Activated CD4-positive, alpha-beta T cell treated with anti-CD3 and anti-CD28 coated beads for 36 hours (primary cell): ENCODE measurements at regions of chr7 and their contacts with region 1.

Region 1: DNA sequence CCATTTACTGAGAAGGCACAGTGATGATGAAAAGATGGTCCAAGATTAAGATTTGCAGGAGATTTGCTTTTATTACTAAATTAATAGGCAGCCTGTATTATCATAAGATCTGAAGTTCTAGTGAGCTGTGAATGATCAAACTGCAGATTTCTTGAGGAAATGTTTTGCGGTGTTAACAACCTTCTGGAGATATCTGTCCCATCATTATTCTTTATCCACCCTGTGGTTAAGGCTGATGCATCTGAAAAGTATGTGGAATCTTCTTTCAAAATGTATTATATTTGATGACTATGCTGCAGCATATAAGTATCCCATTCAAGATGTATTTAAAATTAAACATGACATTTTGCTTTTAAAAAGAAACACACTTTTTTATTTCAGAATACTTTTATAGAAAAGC is 150.3 kb downstream of the POLR1F start:
- DNase-seq: no peak
- ATAC-seq: no peak
- H3K4me3 Mint-ChIP-seq: no peak overlapping the region
- H3K27ac Mint-ChIP-seq: no peak overlapping the region
- H3K4me1 Mint-ChIP-seq: no peaks in the 10 kb centered on the region
- H3K27me3 Mint-ChIP-seq: no peaks in the 10 kb centered on the region

Region 2: DNA sequence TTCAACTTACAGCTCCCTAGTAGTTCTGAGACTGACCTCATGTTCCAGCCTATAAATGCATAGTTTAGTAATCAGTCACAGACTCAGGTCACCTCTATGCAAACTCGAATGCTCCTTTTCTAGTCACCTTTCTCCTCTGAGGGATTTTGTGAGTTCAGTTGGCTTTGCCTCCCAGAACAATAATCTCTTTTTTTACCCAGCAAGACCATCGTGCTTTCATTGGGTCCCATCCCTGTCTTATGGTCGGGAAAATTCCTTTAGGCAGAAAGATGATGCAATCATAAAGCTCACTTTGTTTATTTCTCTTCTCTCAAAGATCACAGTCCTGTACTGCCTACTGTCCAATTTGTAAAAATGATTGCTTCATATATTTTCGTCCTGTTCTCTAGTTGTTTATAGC is 479.5 kb before region 1 on chr7:
- CTCF ChIA-PET with region 1: no interaction called
- POLR2A ChIA-PET with region 1: no interaction called
- intact Hi-C with region 1: no loop called
- DNase-seq: no peak
- ATAC-seq: no peak
- H3K4me3 Mint-ChIP-seq: no peak overlapping the region
- H3K27ac Mint-ChIP-seq: no peak overlapping the region
- H3K4me1 Mint-ChIP-seq: no peaks in the 10 kb centered on the region
- H3K27me3 Mint-ChIP-seq: no peaks in the 10 kb centered on the region

Region 3: DNA sequence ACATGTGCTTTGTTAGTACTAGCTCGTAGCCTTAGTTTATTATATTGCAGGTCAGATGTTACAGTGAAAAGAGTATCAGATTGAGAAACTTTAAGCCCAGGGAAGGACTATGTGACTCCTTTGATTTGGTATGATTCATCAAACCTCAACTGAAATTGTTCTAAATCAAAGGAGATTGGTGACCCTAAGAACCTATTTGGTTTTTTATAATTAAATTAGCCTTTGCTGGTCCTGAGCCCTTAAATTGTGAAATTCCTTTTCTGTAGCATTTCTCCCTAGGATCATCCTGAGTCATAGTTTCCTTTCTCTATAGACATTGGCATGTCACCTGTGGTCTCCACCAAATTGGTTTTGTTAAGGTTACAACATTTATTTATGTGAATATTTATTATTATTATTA is 60.6 kb after region 1 on chr7:
- CTCF ChIA-PET with region 1: no interaction called
- POLR2A ChIA-PET with region 1: no interaction called
- intact Hi-C with region 1: loop called in 1 of 2 experiments (anchors 10 kb)
- DNase-seq: no peak
- ATAC-seq: no peak
- H3K4me3 Mint-ChIP-seq: no peak overlapping the region
- H3K27ac Mint-ChIP-seq: no peak overlapping the region
- H3K4me1 Mint-ChIP-seq: no peaks in the 10 kb centered on the region
- H3K27me3 Mint-ChIP-seq: no peaks in the 10 kb centered on the region

Region 4: GRCh38 chr7:20466543-20467021 is 908.1 kb after region 1 on chr7:
- CTCF ChIA-PET with region 1: no interaction called
- POLR2A ChIA-PET with region 1: no interaction called
- intact Hi-C with region 1: no loop called
- DNase-seq: no peak
- ATAC-seq: no peak
- H3K4me3 Mint-ChIP-seq: no peak overlapping the region
- H3K27ac Mint-ChIP-seq: no peak overlapping the region
- H3K4me1 Mint-ChIP-seq: no peaks in the 10 kb centered on the region
- H3K27me3 Mint-ChIP-seq: peaks cover under 1% of the 10 kb centered on the region